GM12878 (cell line): ENCODE measurements at regions of chr2 and their contacts with region 1.

Region 1: GRCh38 chr2:168773719-168774521 is 28.5 kb upstream of the NOSTRIN start:
- DNase-seq: no peak
- ATAC-seq: peak; percentile 92
- H3K4me3 ChIP-seq: no peak overlapping the region
- H3K27ac ChIP-seq: no peak overlapping the region
- H3K4me1 ChIP-seq: no peaks in the 10 kb centered on the region
- H3K27me3 ChIP-seq: no peaks in the 10 kb centered on the region
- CTCF ChIP-seq: peak; percentile 57 to 77 (median 66)
- EP300 ChIP-seq: no peak
- POLR2A ChIP-seq: no peak
- RAD21 ChIP-seq: peak; percentile 63

Region 2: DNA sequence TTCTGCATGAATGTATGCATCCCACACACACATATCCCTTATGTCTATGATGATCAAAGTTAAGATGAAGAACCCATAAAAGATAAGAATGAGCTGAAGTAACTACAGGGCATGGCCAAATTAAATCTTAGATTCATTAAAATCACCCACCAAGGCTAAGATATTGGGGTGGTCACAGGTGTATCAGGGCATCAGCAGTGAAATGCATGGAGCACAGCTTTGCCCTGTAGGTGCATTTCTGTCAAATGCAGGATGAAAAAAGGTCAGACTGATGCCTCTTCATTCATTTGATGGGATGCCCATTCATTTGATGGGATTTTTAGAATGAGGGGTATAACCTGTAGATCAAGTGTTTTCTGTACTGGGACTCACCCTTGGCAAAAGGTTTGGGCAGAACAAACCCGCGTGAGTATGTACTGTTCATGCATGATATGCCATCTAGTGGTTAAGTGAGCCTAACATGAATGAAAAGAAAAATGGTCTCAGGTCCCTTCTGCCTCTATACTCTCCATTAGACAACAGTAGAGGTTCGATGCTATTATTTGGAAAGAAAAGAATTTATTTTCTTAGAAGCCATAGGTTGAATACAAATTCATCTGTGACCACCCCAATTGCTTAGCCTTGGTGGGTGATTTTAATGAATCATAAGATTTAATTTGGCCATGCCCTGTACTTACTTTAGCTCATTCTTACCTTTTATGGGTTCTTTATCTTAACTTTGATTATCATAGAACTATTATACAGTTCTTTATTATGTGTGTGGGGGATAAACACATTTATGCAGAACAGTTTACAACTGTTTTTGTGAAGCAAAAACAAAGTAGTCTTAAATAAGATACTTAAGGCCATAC is 14.7 kb before region 1 on chr2:
- CTCF ChIA-PET with region 1: no interaction called
- POLR2A ChIA-PET with region 1: no interaction called
- RAD21 ChIA-PET with region 1: no interaction called
- SMC1A ChIA-PET with region 1: no interaction called
- in situ Hi-C with region 1: no loop called
- intact Hi-C with region 1: no loop called
- DNase-seq: peak; percentile 16
- ATAC-seq: peak; percentile 96
- H3K4me3 ChIP-seq: no peak overlapping the region
- H3K27ac ChIP-seq: no peak overlapping the region
- H3K4me1 ChIP-seq: peaks cover 5% of the 10 kb centered on the region; the same call in 1 of the 2 replicates
- H3K27me3 ChIP-seq: no peaks in the 10 kb centered on the region
- CTCF ChIP-seq: peak; percentile 52 to 68 (median 55); a peak in 5 of 6 replicates
- EP300 ChIP-seq: no peak
- POLR2A ChIP-seq: no peak
- RAD21 ChIP-seq: peak; percentile 83

Region 3: GRCh38 chr2:168912901-168913369 is 139.0 kb after region 1 on chr2:
- CTCF ChIA-PET with region 1: interaction called, 9 read pairs
- POLR2A ChIA-PET with region 1: no interaction called
- RAD21 ChIA-PET with region 1: no interaction called
- SMC1A ChIA-PET with region 1: no interaction called
- in situ Hi-C with region 1: loop called (anchors 5 kb)
- intact Hi-C with region 1: no loop called
- DNase-seq: no peak
- ATAC-seq: no peak
- H3K4me3 ChIP-seq: no peak overlapping the region
- H3K27ac ChIP-seq: no peak overlapping the region
- H3K4me1 ChIP-seq: no peaks in the 10 kb centered on the region
- H3K27me3 ChIP-seq: peaks cover 5 to 11% of the 10 kb centered on the region in 2 experiments; a peak in 3 of 4 replicates
- CTCF ChIP-seq: no peak
- EP300 ChIP-seq: no peak
- POLR2A ChIP-seq: no peak
- RAD21 ChIP-seq: no peak